HEK293 (cell line): ENCODE measurements at regions of chr1 and their contacts with region 1.

Region 1: DNA sequence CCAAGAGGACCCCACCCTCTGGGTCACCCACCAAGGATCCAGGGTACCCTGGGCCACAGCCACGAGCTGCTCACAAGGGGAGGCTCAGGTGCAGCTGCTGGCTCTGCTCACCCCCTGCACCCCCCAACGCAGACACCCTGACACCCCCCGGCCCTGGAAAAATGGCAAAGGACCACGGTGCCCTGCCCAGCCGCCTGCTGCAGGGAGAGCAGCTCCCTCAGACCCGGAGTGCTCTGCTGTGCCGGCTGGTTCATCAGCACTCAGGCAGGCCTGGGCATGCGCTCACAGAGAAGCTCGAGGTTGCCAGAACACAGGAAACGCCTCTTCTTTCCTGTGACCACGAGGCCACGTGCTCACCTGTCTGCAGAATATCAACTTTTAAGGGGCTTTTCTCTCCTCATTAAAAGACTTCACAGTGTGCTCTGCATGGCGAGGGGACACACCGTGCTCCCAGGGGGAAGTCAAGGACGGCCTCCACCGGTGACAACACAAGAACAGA is 4.3 kb upstream of the C1QTNF12 start:
- H3K4me3 ChIP-seq: no peak overlapping the region
- H3K27ac ChIP-seq: peak overlapping the region; percentile 72
- H3K4me1 ChIP-seq: no peaks in the 10 kb centered on the region; the same call in 1 of the 2 replicates
- CTCF ChIP-seq: no peak

Region 2: DNA sequence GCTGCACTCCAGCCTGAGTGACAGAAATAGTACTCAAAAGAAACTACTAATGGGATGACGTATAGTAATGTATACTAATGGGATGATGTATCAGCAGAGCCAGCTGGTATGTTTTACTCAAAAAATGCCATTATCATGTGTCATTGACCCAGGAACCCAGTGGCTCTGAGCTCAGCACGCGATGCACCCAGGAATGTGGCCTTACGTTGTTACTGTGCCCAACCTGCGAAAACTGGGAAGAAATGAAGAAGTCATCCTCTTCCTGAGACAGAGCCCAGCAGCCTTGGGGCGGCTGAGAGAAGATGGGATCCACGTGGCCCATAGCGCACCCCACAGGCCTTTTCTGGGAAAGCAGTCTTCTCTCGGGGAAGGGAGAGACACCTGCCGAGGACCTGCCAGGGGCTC is 14.0 kb after region 1 on chr1:
- CTCF ChIA-PET with region 1: interaction called, 12 read pairs
- POLR2A ChIA-PET with region 1: interaction called, 6 read pairs
- H3K4me3 ChIP-seq: no peak overlapping the region
- H3K27ac ChIP-seq: no peak overlapping the region
- H3K4me1 ChIP-seq: no peaks in the 10 kb centered on the region
- CTCF ChIP-seq: 0 out of 2 replicates have a peak, but pooled peaks have one; percentile 11